Activated naive CD4-positive, alpha-beta T cell treated with anti-CD3 and anti-CD28 coated beads, Interleukin-2, amount 10 ng/mL, durations not matched to agents 7 days and 5 days (primary cell): ENCODE measurements at regions of chr15 and their contacts with region 1.

Region 1: GRCh38 chr15:98421419-98422129 is 226.8 kb upstream of the IGF1R start:
- DNase-seq: peak; percentile 72
- H3K4me3 Mint-ChIP-seq: no peak overlapping the region
- H3K27ac Mint-ChIP-seq: no peak overlapping the region
- H3K4me1 Mint-ChIP-seq: peaks cover 4% of the 10 kb centered on the region
- H3K27me3 Mint-ChIP-seq: peaks cover 73% of the 10 kb centered on the region

Region 2: DNA sequence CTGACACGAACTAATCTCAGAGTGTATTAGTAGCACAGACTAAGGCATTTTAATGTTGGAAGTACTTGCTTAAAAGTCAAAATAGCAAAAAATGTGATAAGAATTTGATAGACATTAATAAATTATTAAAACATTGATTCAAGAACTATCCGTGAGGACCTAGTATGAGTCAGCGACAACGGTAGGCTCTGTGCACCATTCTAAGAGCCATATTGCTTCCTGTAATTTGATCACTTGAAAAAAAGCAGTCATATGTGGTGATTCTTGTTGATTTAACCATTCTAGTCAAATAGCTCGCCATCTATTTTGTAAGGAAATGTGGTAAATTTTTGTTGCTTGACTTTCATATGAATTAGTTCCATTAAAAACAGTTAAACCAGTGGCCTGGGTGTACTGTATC is 996.0 kb before region 1 on chr15:
- CTCF ChIA-PET with region 1: no interaction called
- DNase-seq: no peak
- H3K4me3 Mint-ChIP-seq: no peak overlapping the region
- H3K27ac Mint-ChIP-seq: no peak overlapping the region
- H3K4me1 Mint-ChIP-seq: no peaks in the 10 kb centered on the region
- H3K27me3 Mint-ChIP-seq: no peaks in the 10 kb centered on the region

Region 3: DNA sequence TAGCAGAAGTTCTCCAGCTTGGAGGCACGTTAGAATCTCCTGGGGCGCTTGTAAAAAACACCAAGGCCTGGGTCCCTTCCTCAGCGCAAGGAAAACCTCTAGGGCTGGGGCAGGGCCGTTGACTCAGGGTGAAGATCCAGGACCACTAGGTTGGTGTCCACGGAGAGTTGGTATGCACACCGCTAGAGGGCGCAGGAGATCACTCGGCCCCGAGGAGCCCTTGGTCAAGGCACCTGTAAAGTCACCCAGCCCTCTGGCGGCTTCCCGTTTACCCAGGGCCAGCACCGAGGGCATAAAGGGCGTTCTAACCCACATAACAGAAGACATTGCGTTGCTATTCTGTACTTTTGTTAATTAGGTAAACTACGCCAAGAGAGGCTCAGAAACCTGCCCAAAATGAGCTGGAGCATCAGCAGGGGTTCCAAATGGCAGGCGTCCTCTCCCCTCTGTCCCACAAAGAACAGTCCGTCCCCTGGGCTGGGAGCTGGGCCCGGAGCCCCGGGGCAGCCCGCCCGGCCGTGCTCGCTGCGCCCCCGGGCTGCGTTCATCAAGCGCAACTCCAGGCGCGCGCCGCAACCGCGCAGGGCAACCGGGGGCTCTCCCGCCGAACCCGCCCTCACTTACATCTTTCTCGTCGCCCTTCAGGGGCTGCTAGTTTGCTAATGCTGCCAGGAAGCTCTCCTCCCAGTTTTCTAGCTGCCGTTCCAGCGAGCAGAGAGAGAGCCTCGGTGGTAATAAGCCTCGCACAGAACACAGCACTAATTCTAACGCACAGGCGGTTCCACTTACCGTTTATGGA is 128.9 kb before region 1 on chr15:
- CTCF ChIA-PET with region 1: interaction called, 10 read pairs
- DNase-seq: peak; percentile 57
- H3K4me3 Mint-ChIP-seq: no peak overlapping the region
- H3K27ac Mint-ChIP-seq: no peak overlapping the region
- H3K4me1 Mint-ChIP-seq: no peaks in the 10 kb centered on the region
- H3K27me3 Mint-ChIP-seq: peaks cover 30% of the 10 kb centered on the region

Region 4: GRCh38 chr15:98311566-98312188 is 109.9 kb before region 1 on chr15:
- CTCF ChIA-PET with region 1: interaction called, 45 read pairs
- DNase-seq: peak; percentile 84
- H3K4me3 Mint-ChIP-seq: no peak overlapping the region
- H3K27ac Mint-ChIP-seq: no peak overlapping the region
- H3K4me1 Mint-ChIP-seq: no peaks in the 10 kb centered on the region
- H3K27me3 Mint-ChIP-seq: peaks cover 14% of the 10 kb centered on the region